ENCODE measurements at regions of chr11 and their contacts with region 1.

Region 1: DNA sequence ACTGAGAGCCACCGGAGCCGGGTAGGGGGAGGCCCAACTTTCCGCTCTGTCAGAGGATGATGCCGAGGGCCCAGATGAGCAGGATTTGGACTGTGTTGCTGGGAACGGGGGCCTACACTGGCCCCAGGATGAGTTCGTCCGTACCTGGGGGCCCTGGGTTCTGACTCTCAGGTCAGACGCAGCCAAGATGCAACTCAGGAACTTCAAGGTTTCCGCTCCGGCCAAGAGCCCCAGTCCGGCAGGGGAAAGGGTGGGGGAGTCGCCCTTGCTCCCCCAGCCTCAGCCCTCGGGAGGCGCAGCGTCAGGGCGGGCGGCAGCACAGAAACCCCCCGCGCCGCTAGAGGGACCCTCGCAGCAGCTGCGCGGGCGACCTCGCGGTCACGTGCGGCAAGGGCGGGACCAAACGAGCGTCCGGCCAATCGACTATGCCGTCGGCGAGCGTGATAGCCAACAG is 241 bp upstream of the ARL2 start:
- DNase-seq: peak; percentile 84
- ATAC-seq: peak; percentile 83
- H3K4me3 Mint-ChIP-seq: peak overlapping the region; percentile 90
- H3K27ac Mint-ChIP-seq: peak overlapping the region; percentile 96
- H3K4me1 Mint-ChIP-seq: peaks cover 26% of the 10 kb centered on the region
- H3K27me3 Mint-ChIP-seq: no peaks in the 10 kb centered on the region
- CTCF ChIP-seq: no peak

Region 2: GRCh38 chr11:64787526-64788320 is 226.0 kb before region 1 on chr11:
- CTCF ChIA-PET with region 1: interaction called, 3 read pairs
- POLR2A ChIA-PET with region 1: no interaction called
- intact Hi-C with region 1: loop called (anchors 5 kb)
- DNase-seq: peak; percentile 57
- ATAC-seq: peak; percentile 74
- H3K4me3 Mint-ChIP-seq: no peak overlapping the region
- H3K27ac Mint-ChIP-seq: peak overlapping the region; percentile 73
- H3K4me1 Mint-ChIP-seq: peaks cover 18% of the 10 kb centered on the region
- H3K27me3 Mint-ChIP-seq: no peaks in the 10 kb centered on the region
- CTCF ChIP-seq: no peak

Region 3: GRCh38 chr11:64916775-64917662 is 96.7 kb before region 1 on chr11 and contains the start of gene ATG2A:
- CTCF ChIA-PET with region 1: interaction called, 7 read pairs
- POLR2A ChIA-PET with region 1: interaction called, 3 read pairs
- intact Hi-C with region 1: loop called (anchors 1 kb)
- DNase-seq: peak; percentile 97
- ATAC-seq: peak; percentile 98
- H3K4me3 Mint-ChIP-seq: peak within 1 kb of the TSS; percentile 88
- H3K27ac Mint-ChIP-seq: peak within 1 kb of the TSS; percentile 85
- H3K4me1 Mint-ChIP-seq: peaks cover 38% of the 10 kb centered on the region
- H3K27me3 Mint-ChIP-seq: no peaks in the 10 kb centered on the region
- CTCF ChIP-seq: no peak
- total RNA-seq, gene ATG2A: 31.2 and 35.0 TPM in 2 replicates

Region 4: DNA sequence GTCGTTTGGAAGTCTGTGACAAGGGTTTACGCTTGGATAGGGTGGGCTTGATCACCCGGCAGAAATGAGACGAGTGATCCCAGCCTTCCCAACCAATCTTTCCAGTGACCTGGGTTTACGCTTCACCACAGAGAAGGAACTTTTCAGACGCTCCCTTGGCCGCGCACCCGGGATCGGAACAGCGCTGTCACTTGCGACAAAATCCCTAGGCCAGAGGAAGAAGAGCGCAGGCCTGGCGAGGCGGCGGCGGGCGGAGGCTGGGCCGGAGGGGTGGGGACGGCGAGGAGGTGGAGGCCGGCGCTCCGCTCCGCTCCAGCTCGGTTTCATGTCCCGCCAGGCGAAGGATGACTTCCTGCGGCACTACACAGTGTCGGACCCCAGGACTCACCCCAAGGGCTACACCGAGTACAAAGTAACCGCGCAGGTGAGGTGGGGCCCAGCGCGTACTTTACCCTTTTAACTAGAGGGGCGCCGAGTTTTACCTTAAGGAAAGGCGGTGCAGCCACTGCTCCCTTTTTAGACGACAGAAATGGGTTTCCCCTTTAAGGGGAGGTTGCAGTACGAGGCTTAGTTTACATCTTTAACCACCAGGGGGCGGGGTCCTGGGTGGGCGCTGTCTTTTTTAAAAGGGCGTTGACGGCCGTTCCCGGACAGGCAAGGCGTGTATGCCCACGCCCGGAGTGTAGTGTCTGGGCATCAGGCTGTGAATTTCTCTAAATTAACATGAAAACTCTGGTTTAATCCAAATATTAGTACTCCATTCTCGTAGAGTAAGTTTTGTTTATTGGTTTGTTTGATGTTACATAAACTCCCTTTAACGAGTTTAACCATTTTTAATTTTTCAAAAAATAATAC is 13.7 kb after region 1 on chr11 and contains the start of gene SNX15:
- CTCF ChIA-PET with region 1: interaction called, 5 read pairs
- POLR2A ChIA-PET with region 1: interaction called, 9 read pairs
- intact Hi-C with region 1: loop called (anchors 1 kb)
- DNase-seq: peak; percentile 72
- ATAC-seq: peak; percentile 90
- H3K4me3 Mint-ChIP-seq: peak within 1 kb of the TSS; percentile 85
- H3K27ac Mint-ChIP-seq: peak within 1 kb of the TSS; percentile 88
- H3K4me1 Mint-ChIP-seq: peaks cover 21% of the 10 kb centered on the region
- H3K27me3 Mint-ChIP-seq: no peaks in the 10 kb centered on the region
- CTCF ChIP-seq: no peak
- total RNA-seq, gene SNX15: 17.3 and 19.3 TPM in 2 replicates

Region 5: GRCh38 chr11:65095974-65096806 is 82.5 kb after region 1 on chr11 and contains the start of gene VPS51:
- CTCF ChIA-PET with region 1: no interaction called
- POLR2A ChIA-PET with region 1: interaction called, 7 read pairs
- intact Hi-C with region 1: loop called (anchors 1 kb)
- DNase-seq: peak; percentile 74
- ATAC-seq: peak; percentile 92
- H3K4me3 Mint-ChIP-seq: peak within 1 kb of the TSS; percentile 91
- H3K27ac Mint-ChIP-seq: peak within 1 kb of the TSS; percentile 88
- H3K4me1 Mint-ChIP-seq: peaks cover 18% of the 10 kb centered on the region
- H3K27me3 Mint-ChIP-seq: no peaks in the 10 kb centered on the region
- CTCF ChIP-seq: no peak
- total RNA-seq, gene VPS51: 224 and 243 TPM in 2 replicates

Region 6: GRCh38 chr11:65180877-65181568 is 167.3 kb after region 1 on chr11:
- CTCF ChIA-PET with region 1: no interaction called
- POLR2A ChIA-PET with region 1: interaction called, 3 read pairs
- intact Hi-C with region 1: loop called (anchors 1 kb)
- DNase-seq: peak; percentile 77
- ATAC-seq: peak; percentile 82
- H3K4me3 Mint-ChIP-seq: peak overlapping the region; percentile 92
- H3K27ac Mint-ChIP-seq: peak overlapping the region; percentile 92
- H3K4me1 Mint-ChIP-seq: peaks cover 21% of the 10 kb centered on the region
- H3K27me3 Mint-ChIP-seq: no peaks in the 10 kb centered on the region
- CTCF ChIP-seq: no peak

Measured in activated B cell treated with CpG ODN at 0.5 μM for 24 hours (primary cell).